CD4-positive, alpha-beta T cell (primary cell): ENCODE measurements at regions of chr7 and their contacts with region 1.

Region 1: GRCh38 chr7:23531794-23532489 is at the start of gene TRA2A:
- DNase-seq: peak; percentile 92 to 99 (median 97)
- ATAC-seq: peak; percentile 91
- H3K4me3 ChIP-seq: peak within 1 kb of the TSS; percentile 97
- H3K4me3 Mint-ChIP-seq: peak within 1 kb of the TSS; percentile 94
- H3K27ac ChIP-seq: peak within 1 kb of the TSS; percentile 95 to 98
- H3K27ac Mint-ChIP-seq: peak within 1 kb of the TSS; percentile 97
- H3K4me1 ChIP-seq: peaks cover 29% of the 10 kb centered on the region
- H3K4me1 Mint-ChIP-seq: peaks cover 49% of the 10 kb centered on the region
- H3K27me3 ChIP-seq: no peaks in the 10 kb centered on the region
- H3K27me3 Mint-ChIP-seq: no peaks in the 10 kb centered on the region
- CTCF ChIP-seq: no peak
- total RNA-seq, gene TRA2A: 246 to 275 TPM

Region 2: DNA sequence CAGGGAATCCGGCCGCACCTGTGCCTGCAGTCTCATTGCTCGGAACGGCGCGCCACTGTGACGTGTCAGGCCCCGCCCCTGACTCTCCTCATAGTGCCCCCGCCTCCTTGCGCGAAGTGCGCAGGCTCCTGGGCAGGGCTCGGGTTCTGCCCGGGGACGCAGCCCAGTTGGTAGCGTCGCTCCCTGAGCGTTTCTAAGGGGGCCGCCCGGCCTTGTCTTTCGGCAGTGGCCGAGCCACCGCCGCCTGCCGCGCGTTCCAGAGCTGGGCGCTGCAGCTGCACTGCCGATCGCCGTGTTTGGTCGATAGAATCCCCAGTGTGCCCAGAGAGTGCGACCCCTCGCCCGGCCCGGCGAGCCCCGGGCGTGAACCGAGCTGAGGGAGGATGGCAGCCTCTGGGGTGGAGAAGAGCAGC is 426.3 kb before region 1 on chr7 and contains the start of gene KLHL7:
- CTCF ChIA-PET with region 1: no interaction called
- POLR2A ChIA-PET with region 1: interaction called, 4 read pairs
- intact Hi-C with region 1: loop called in 1 of 2 experiments (anchors 10 kb)
- DNase-seq: peak; percentile 89 to 98 (median 96)
- ATAC-seq: peak; percentile 94
- H3K4me3 ChIP-seq: peak within 1 kb of the TSS; percentile 98
- H3K4me3 Mint-ChIP-seq: peak within 1 kb of the TSS; percentile 98
- H3K27ac ChIP-seq: peak within 1 kb of the TSS; percentile 94
- H3K27ac Mint-ChIP-seq: peak within 1 kb of the TSS; percentile 96
- H3K4me1 ChIP-seq: peaks cover 19% of the 10 kb centered on the region
- H3K4me1 Mint-ChIP-seq: peaks cover 52% of the 10 kb centered on the region
- H3K27me3 ChIP-seq: no peaks in the 10 kb centered on the region
- H3K27me3 Mint-ChIP-seq: no peaks in the 10 kb centered on the region
- CTCF ChIP-seq: no peak
- total RNA-seq, gene KLHL7: 14.3 to 19.6 TPM

Region 3: DNA sequence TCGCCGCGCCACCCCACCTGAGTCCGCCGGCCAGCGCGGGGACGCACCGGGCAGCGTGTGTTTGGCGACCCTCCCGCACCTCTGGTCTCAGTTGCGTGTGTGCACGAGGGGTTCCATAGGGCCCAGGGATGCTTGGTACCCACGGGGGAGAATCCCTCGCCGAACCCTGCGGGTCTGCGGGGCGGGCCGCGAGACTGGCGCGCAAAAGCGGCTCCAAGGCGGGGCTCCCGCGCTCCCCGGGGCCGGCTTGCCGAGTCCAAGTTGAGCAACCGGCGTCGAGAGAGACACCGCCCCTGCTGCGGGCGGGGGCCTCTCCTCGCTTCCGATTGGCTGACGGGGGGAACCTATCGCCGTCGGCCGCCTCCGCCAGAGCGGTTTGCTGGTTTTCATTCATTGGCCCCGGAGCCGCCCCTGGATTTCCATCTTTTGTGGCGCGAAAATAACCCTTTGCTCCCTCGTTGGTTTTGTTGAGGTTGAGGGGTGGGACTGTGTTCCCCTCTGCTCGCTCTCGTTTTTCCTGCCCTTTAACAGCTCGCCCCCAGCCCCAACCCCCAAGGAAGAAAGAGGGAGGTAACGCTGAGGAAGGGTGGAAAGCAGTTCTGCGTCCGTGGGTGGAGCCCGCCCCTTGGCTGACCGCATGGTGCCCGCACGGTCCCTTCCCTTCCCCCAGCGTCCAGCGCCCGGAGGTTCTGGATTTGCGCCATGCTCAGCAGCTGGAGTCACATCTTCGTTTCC is 57.7 kb before region 1 on chr7:
- CTCF ChIA-PET with region 1: no interaction called
- POLR2A ChIA-PET with region 1: interaction called, 4 read pairs
- intact Hi-C with region 1: loop called in 1 of 2 experiments (anchors 5 kb)
- DNase-seq: peak in 7 of 14 experiments; percentile 25 to 73 (median 44)
- ATAC-seq: peak; percentile 38
- H3K4me3 ChIP-seq: no peak overlapping the region
- H3K4me3 Mint-ChIP-seq: peak overlapping the region; percentile 11
- H3K27ac ChIP-seq: no peak overlapping the region
- H3K27ac Mint-ChIP-seq: no peak overlapping the region
- H3K4me1 ChIP-seq: peaks cover 40% of the 10 kb centered on the region
- H3K4me1 Mint-ChIP-seq: peaks cover 37% of the 10 kb centered on the region
- H3K27me3 ChIP-seq: peaks cover 50 to 96% of the 10 kb centered on the region in 2 experiments
- H3K27me3 Mint-ChIP-seq: peaks cover 79% of the 10 kb centered on the region
- CTCF ChIP-seq: no peak

Region 4: DNA sequence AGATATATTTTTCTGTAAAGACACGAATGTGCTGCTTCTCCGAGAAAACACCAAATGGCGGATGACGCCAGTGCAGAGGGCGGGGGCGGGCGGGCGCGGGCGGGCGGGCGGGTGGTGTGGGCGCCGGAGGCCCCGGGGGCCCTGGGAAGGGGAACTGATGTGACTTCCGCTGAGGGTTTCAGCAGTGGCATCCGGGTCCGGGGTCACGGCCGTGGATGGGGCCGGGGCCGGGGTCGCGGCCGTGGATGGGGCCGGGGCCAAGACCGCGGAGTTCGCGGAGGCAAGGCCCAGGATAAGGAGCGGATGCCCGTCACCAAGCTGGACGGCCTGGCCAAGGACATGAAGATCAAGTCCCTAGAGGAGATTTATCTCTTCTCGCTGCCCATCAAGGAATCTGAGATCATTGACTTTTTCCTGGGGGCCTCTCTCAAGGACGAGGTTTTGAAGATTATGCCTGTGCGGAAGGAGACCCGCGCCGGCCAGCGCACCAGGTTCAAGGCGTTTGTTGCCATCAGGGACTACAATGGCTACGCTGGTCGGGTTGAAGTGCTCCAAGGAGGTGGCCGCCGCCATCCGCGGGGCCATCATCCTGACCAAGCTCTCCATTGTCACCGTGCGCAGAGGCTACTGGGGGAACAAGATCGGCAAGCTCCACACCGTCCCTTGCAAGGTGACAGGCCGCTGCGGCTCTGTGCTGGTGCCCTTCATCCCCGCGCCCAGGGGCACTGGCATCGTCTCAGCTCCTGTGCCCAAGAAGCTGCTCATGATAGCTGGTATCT is 41.4 kb before region 1 on chr7:
- CTCF ChIA-PET with region 1: no interaction called
- POLR2A ChIA-PET with region 1: interaction called, 7 read pairs
- intact Hi-C with region 1: loop called in 1 of 2 experiments (anchors 5 kb)
- DNase-seq: peak; percentile 37 to 81 (median 59)
- ATAC-seq: peak; percentile 96
- H3K4me3 ChIP-seq: peak overlapping the region; percentile 66
- H3K4me3 Mint-ChIP-seq: peak overlapping the region; percentile 85
- H3K27ac ChIP-seq: no peak overlapping the region
- H3K27ac Mint-ChIP-seq: peak overlapping the region; percentile 69
- H3K4me1 ChIP-seq: peaks cover 14% of the 10 kb centered on the region
- H3K4me1 Mint-ChIP-seq: peaks cover 9% of the 10 kb centered on the region
- H3K27me3 ChIP-seq: no peaks in the 10 kb centered on the region
- H3K27me3 Mint-ChIP-seq: no peaks in the 10 kb centered on the region
- CTCF ChIP-seq: no peak